ENCODE measurements at regions of chr1 and their contacts with region 1.

Region 1: GRCh38 chr1:20358761-20359263 is 68.1 kb downstream of the VWA5B1 start:
- DNase-seq: peak; percentile 78
- H3K4me3 ChIP-seq: peak overlapping the region in 1 of 4 donors; percentile 27
- H3K27ac ChIP-seq: peak overlapping the region; percentile 37 to 64 (median 46)
- H3K4me1 ChIP-seq: peaks cover 4 to 22% (median 15%) of the 10 kb centered on the region in 4 donors
- H3K27me3 ChIP-seq: peaks cover 8% of the 10 kb centered on the region
- CTCF ChIP-seq: no peak
- EP300 ChIP-seq: no peak
- POLR2A ChIP-seq: no peak

Region 2: DNA sequence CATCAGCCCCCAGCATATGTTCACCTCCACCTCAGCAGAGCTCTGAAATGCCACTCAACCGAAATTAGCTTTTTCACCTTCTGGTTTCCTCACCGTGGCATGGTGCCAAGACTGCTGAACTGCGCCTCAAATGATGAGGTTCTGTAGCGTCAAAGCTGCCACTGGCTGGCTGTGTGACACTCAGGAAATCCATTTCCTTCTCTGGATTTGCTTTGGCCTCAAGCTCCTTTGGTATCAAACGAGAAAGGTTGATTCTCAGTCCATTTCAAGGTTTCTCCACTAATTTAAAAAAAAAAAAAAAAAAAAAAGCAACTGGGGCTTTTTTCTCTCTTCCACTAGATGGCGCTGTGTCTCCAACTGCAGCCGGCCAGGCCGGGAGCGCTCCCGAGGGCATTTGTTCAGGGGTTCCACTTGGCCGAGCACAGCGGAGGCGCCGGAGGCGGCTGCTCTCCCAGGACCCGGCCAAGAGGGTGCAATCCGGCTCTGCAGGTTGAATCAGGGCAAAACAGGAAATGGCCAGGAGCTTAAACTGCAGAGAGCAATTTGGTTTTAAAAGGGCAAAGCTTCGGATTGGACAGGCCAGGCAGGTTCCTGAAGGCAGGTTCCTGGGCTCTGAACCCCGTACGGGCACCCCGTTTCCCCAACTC is 146.0 kb before region 1 on chr1:
- in situ Hi-C with region 1: loop called in 1 of 4 experiments (anchors 5 kb)
- intact Hi-C with region 1: no loop called
- DNase-seq: peak; percentile 81
- H3K4me3 ChIP-seq: peak overlapping the region in 1 of 4 donors; percentile 36
- H3K27ac ChIP-seq: peak overlapping the region; percentile 61 to 72 (median 71)
- H3K4me1 ChIP-seq: peaks cover 9 to 26% (median 20%) of the 10 kb centered on the region in 4 donors
- H3K27me3 ChIP-seq: peaks cover 11% of the 10 kb centered on the region
- CTCF ChIP-seq: peak; percentile 77 to 84 (median 83)
- EP300 ChIP-seq: no peak
- POLR2A ChIP-seq: no peak

Region 3: DNA sequence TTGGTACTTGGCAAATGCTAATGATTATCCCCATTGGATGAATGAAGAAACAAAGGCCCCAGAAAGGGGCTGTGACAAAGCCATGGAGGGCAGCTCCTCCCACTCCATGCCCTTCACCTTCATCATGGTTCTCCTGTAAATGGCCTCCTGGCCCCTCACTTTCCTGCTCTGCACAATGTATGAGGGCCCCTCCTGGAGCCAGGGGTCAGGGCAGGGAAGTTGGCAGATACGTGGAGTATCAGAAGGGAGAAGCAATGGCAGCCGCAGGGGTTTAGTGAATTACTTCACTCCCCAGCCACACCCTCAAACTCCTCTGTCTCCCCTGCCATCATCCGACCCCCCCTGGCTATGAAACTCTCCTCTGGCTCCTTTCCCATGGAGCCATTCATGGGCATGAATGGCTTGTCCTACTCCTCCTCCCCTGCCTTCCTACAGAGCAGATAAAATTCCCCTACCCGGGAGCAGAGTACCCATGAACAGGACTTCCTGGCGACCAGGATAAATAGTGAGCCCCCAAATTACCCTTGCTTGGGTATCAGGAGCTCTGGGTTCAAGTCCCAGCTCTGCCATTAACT is 40.9 kb after region 1 on chr1:
- in situ Hi-C with region 1: no loop called
- intact Hi-C with region 1: loop called (anchors 1 kb)
- DNase-seq: no peak
- H3K4me3 ChIP-seq: no peak overlapping the region
- H3K27ac ChIP-seq: no peak overlapping the region
- H3K4me1 ChIP-seq: no peaks in the 10 kb centered on the region
- H3K27me3 ChIP-seq: peaks cover 54% of the 10 kb centered on the region
- CTCF ChIP-seq: no peak
- EP300 ChIP-seq: no peak
- POLR2A ChIP-seq: no peak